ENCODE measurements at regions of chr7 and their contacts with region 1.

Region 1: DNA sequence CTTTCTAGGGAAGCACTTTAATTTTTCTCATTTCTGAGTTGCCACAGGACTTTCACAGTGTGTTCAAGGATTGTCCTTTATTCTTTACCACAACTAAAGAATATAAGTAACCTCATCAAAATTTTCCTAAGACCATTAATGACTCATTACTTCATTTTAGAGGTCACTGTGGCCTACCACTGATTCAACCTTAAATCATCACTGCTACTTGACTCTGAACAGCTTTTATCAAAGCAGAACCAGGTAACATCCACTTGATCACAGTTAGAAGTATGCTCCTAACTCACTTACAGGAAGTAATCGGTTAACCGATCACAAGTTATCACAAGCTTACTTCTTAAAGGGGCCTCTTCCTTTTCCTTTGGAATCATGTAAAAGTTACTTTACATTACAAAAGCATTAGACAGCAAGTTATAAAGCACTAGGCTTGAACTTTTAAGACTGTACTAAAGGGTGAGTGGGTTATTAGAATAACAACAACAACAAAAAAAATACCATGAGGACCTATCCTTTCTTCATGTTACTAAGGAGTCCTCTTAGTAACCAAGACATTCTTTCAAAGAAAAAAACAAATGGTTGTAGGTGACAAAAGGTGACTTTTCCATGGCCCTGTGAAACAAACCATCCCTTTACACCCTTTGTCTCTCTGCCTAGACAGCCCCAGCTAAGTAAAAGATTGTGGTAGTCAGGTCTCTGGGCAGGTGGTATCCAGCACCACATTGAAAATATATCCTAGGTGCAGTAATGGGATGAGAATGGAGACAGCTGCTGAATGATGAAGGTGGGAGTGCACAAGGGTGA is 40.0 kb upstream of the PDK4 start:
- DNase-seq: no peak
- ATAC-seq: no peak

Region 2: GRCh38 chr7:95056107-95056739 is 580.1 kb before region 1 on chr7:
- intact Hi-C with region 1: no loop called
- DNase-seq: no peak
- ATAC-seq: no peak

Region 3: DNA sequence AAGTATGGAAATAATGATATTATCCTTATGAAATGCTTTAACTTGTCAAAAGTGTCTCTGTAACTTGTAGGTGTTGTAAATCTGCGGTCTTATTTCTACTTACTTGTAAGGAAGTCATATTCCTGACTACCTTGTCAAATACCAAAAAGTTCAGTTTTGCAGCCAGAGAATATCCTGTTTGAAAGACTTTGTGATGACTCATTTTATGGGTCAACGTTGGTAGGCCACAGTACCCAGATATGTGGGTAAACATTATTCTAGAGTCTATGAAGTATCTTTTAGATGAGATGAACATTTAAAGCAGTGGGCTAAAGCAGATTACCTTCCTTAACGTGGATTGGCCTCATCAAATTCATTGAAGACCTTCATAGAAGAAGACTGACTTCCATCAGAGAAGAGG is 533.7 kb before region 1 on chr7:
- intact Hi-C with region 1: no loop called
- DNase-seq: no peak
- ATAC-seq: no peak

Region 4: GRCh38 chr7:95660023-95660434 is 23.7 kb after region 1 on chr7:
- intact Hi-C with region 1: loop called in 1 of 2 experiments (anchors 1 kb)
- DNase-seq: no peak
- ATAC-seq: no peak

Region 5: DNA sequence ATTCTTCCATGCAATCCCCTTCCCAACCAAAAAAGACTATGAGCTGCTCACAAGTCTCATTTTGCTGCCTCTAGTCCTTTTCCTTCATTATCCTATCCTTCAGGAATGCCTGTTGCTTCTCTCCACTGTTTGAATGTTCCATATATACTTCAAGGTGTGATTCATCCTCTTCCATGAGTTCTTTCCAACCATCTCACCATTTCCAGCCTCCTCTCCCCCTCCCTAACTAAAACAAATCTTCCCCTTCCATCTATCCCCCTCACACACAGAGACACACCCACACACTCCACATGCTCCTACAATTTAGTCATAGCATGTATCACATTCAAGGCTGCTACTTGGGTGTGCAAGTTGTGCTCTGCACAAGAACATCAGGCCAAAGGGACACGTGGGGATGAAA is 390.3 kb after region 1 on chr7:
- intact Hi-C with region 1: no loop called
- DNase-seq: no peak
- ATAC-seq: no peak

Measured in left cardiac atrium (tissue), 4 donors.